CD4-positive, alpha-beta T cell (primary cell): ENCODE measurements at regions of chr2 and their contacts with region 1.

Region 1: DNA sequence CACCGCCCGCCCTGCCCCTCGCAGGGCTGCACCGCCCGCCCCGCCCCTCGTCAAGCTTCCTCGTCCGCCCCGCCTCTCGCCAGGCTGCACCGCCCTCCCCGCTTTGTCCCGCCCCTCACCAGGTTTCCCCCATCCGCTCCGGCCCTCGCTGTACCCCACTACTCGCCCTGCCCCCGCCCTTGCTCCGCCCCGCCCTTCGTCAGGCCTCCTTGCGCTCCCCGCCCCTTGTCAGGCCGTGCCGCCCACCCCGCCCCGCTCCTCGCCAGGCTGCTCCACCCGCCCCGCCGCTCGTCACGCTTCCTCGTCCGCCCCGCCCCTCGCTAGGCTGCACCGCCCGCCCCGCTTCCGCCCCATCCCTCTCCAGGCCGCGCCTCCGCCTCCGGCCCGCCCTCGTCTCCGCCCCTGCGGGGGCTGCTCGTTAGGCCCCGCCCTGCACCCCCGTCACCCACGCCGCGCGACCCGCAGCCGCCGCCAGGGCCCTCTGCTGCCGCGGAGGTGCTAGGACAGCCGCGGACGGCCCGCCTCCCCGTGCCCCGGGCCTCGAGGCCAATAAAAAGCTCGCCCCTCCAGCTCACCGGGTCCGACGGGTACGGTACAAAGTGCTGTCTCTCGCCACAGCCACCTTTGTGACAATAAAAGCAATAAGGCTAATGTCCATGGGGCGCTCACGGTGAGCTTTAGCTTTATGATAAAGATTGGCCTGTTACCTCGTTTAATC is 574 bp upstream of the DNPEP start:
- DNase-seq: peak; percentile 98 to 100 (median 99)
- ATAC-seq: peak; percentile 78
- H3K4me3 ChIP-seq: peak overlapping the region; percentile 44
- H3K4me3 Mint-ChIP-seq: peak overlapping the region; percentile 83
- H3K27ac ChIP-seq: peak overlapping the region; percentile 64 to 75
- H3K27ac Mint-ChIP-seq: peak overlapping the region; percentile 95
- H3K4me1 ChIP-seq: peaks cover 26% of the 10 kb centered on the region
- H3K4me1 Mint-ChIP-seq: peaks cover 22% of the 10 kb centered on the region
- H3K27me3 ChIP-seq: no peaks in the 10 kb centered on the region
- H3K27me3 Mint-ChIP-seq: no peaks in the 10 kb centered on the region
- CTCF ChIP-seq: peak; percentile 65

Region 2: GRCh38 chr2:218710687-218711549 is 677.4 kb before region 1 on chr2 and contains the start of gene TTLL4:
- CTCF ChIA-PET with region 1: interaction called, 9 read pairs
- POLR2A ChIA-PET with region 1: no interaction called
- intact Hi-C with region 1: loop called in 1 of 2 experiments (anchors 5 kb)
- DNase-seq: peak; percentile 97 to 99 (median 99)
- ATAC-seq: peak; percentile 98
- H3K4me3 ChIP-seq: peak within 1 kb of the TSS; percentile 96
- H3K4me3 Mint-ChIP-seq: peak within 1 kb of the TSS; percentile 99
- H3K27ac ChIP-seq: peak within 1 kb of the TSS; percentile 66 to 87
- H3K27ac Mint-ChIP-seq: peak within 1 kb of the TSS; percentile 91
- H3K4me1 ChIP-seq: peaks cover 22% of the 10 kb centered on the region
- H3K4me1 Mint-ChIP-seq: peaks cover 26% of the 10 kb centered on the region
- H3K27me3 ChIP-seq: peaks cover 0 to 6% of the 10 kb centered on the region in 2 experiments
- H3K27me3 Mint-ChIP-seq: peaks cover 10% of the 10 kb centered on the region
- CTCF ChIP-seq: peak; percentile 87
- total RNA-seq, gene TTLL4: 7.3 to 10.8 TPM

Region 3: GRCh38 chr2:219206442-219207253 is 181.6 kb before region 1 on chr2 and contains the start of gene ZFAND2B:
- CTCF ChIA-PET with region 1: interaction called, 3 read pairs
- POLR2A ChIA-PET with region 1: interaction called, 5 read pairs
- intact Hi-C with region 1: loop called in 1 of 2 experiments (anchors 10 kb)
- DNase-seq: peak; percentile 88 to 98 (median 95)
- ATAC-seq: peak; percentile 93
- H3K4me3 ChIP-seq: peak within 1 kb of the TSS; percentile 69
- H3K4me3 Mint-ChIP-seq: peak within 1 kb of the TSS; percentile 90
- H3K27ac ChIP-seq: peak within 1 kb of the TSS; percentile 89 to 90
- H3K27ac Mint-ChIP-seq: peak within 1 kb of the TSS; percentile 93
- H3K4me1 ChIP-seq: peaks cover 53% of the 10 kb centered on the region
- H3K4me1 Mint-ChIP-seq: peaks cover 47% of the 10 kb centered on the region
- H3K27me3 ChIP-seq: no peaks in the 10 kb centered on the region
- H3K27me3 Mint-ChIP-seq: no peaks in the 10 kb centered on the region
- CTCF ChIP-seq: no peak
- total RNA-seq, gene ZFAND2B: 65.9 to 67.4 TPM

Region 4: DNA sequence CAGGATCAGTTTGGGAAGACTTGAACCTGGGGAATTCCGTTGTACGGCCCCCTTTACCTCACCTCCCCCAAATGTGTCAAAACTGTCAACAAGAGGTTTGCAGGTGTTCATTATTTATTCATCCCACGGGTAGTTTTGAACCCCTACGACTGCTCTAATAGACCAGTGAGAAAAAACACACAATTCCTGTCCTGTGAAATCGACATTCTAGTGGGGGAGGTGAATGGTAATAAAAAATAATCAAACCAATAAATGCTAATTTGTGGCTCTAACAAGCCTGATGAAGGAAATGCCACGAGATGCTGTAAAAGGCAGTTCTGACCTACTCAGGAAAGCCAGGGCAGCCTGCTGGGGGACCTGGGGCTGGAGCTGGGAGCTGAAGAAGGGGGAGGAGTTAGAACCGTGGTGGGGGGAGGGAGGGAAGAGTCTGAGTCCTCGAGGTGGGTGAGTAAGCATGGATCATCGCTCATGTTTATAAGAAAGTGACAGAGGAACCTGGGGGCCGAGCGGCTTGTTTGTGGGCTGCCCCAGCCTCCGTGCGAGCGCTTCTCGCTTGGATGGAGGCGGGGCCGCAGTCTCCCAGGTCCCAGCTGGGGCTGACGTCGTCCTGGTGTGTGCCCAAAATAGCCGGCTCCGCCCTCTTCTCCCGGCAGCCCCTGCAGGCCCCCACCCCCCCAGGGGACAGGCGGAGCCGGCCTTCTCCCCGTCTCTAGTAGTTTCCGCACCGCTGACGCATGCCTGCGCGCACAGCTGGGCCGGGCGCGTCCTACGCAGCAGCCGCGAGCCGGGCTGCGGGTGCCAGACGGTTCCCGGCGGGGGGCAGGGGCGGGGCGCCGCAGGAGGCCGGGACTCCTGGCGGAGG is 109.4 kb before region 1 on chr2 and contains the start of gene DNAJB2:
- CTCF ChIA-PET with region 1: interaction called, 7 read pairs
- POLR2A ChIA-PET with region 1: interaction called, 24 read pairs
- intact Hi-C with region 1: loop called (anchors 2 to 5 kb)
- DNase-seq: peak; percentile 96 to 100 (median 98)
- ATAC-seq: peak; percentile 76
- H3K4me3 ChIP-seq: peak within 1 kb of the TSS; percentile 66
- H3K4me3 Mint-ChIP-seq: peak within 1 kb of the TSS; percentile 97
- H3K27ac ChIP-seq: peak within 1 kb of the TSS; percentile 95 to 97
- H3K27ac Mint-ChIP-seq: peak within 1 kb of the TSS; percentile 98
- H3K4me1 ChIP-seq: peaks cover 43% of the 10 kb centered on the region
- H3K4me1 Mint-ChIP-seq: peaks cover 43% of the 10 kb centered on the region
- H3K27me3 ChIP-seq: no peaks in the 10 kb centered on the region
- H3K27me3 Mint-ChIP-seq: no peaks in the 10 kb centered on the region
- CTCF ChIP-seq: no peak
- total RNA-seq, gene DNAJB2: 151 to 161 TPM

Region 5: GRCh38 chr2:219441451-219442255 is 53.4 kb after region 1 on chr2:
- CTCF ChIA-PET with region 1: interaction called, 4 read pairs
- POLR2A ChIA-PET with region 1: interaction called, 3 read pairs
- intact Hi-C with region 1: loop called in 1 of 2 experiments (anchors 5 kb)
- DNase-seq: peak; percentile 34 to 89 (median 61)
- ATAC-seq: peak; percentile 82
- H3K4me3 ChIP-seq: peak overlapping the region; percentile 59
- H3K4me3 Mint-ChIP-seq: peak overlapping the region; percentile 81
- H3K27ac ChIP-seq: no peak overlapping the region
- H3K27ac Mint-ChIP-seq: no peak overlapping the region
- H3K4me1 ChIP-seq: peaks cover 12% of the 10 kb centered on the region
- H3K4me1 Mint-ChIP-seq: peaks cover 22% of the 10 kb centered on the region
- H3K27me3 ChIP-seq: peaks cover 2 to 12% of the 10 kb centered on the region in 2 experiments
- H3K27me3 Mint-ChIP-seq: peaks cover 27% of the 10 kb centered on the region
- CTCF ChIP-seq: no peak

Region 6: GRCh38 chr2:219597552-219598307 is 209.4 kb after region 1 on chr2 and contains the start of gene STK11IP:
- CTCF ChIA-PET with region 1: interaction called, 8 read pairs
- POLR2A ChIA-PET with region 1: interaction called, 16 read pairs
- intact Hi-C with region 1: loop called in 1 of 2 experiments (anchors 2 kb)
- DNase-seq: peak; percentile 75 to 95 (median 84)
- ATAC-seq: peak; percentile 85
- H3K4me3 ChIP-seq: peak within 1 kb of the TSS; percentile 73
- H3K4me3 Mint-ChIP-seq: peak within 1 kb of the TSS; percentile 98
- H3K27ac ChIP-seq: peak within 1 kb of the TSS; percentile 70 to 79
- H3K27ac Mint-ChIP-seq: peak within 1 kb of the TSS; percentile 94
- H3K4me1 ChIP-seq: peaks cover 13% of the 10 kb centered on the region
- H3K4me1 Mint-ChIP-seq: peaks cover 24% of the 10 kb centered on the region
- H3K27me3 ChIP-seq: no peaks in the 10 kb centered on the region
- H3K27me3 Mint-ChIP-seq: peaks cover 7% of the 10 kb centered on the region
- CTCF ChIP-seq: no peak
- total RNA-seq, gene STK11IP: 23.9 to 27.2 TPM